Right ventricle myocardium inferior (tissue), 1 donor: ENCODE measurements at regions of chr15 and their contacts with region 1.

Region 1: DNA sequence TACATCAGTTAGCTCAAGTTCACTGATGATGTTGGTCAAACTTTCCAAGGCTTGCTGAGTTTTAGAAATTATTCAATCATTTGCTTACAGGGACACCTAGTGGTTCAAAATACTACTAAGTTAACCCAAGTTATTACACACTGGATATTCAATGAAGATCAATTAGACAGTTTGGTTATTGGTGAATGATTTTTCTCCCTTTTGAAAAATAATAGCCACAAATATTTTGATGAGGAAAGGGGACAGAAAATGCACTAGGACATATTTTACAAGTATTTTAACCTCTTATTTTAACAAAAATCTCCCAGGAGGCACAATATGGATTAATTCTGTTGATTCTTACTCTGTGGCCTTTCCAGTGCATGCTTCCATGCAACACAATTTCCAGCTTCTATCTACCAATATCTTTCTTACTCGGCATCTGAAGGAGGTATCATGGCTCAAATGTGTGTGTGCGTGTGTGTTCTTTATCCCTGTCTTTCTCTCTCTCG is 20.1 kb upstream of the GOLGA6L2 start:
- DNase-seq: no peak
- ATAC-seq: no peak

Region 2: GRCh38 chr15:23039151-23039916 is 427.8 kb before region 1 on chr15 and contains the start of gene TUBGCP5:
- intact Hi-C with region 1: loop called (anchors 10 kb)
- DNase-seq: peak; percentile 98
- ATAC-seq: peak; percentile 99
- total RNA-seq, gene TUBGCP5: 11.3 TPM